Natural killer cell (primary cell): ENCODE measurements at regions of chr2 and their contacts with region 1.

Region 1: DNA sequence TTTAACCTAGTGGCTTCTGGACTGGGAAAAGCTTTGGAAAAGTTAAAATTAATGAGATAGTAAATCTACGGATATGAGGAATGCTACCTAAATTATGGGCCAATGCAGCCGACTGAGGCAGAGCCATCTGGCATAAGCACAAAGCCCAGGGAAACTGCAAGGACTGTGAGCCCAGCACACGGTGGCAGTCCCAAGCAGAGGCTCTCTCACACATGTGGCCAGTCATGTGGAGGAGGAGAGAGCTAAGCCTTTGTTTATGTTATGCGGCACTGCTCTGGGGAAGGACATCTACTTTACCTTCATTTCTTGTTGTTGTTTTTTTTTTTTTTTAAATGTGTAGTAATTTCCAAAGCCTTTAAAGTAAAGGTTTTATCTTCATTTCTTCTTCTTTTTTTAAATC is 267.0 kb downstream of the STK39 start:
- DNase-seq: no peak
- ATAC-seq: no peak
- H3K4me3 ChIP-seq: no peak overlapping the region
- H3K4me3 Mint-ChIP-seq: no peak overlapping the region
- H3K27ac ChIP-seq: no peak overlapping the region
- H3K27ac Mint-ChIP-seq: peak overlapping the region in 1 of 2 donors; percentile 41
- H3K4me1 ChIP-seq: no peaks in the 10 kb centered on the region
- H3K4me1 Mint-ChIP-seq: peaks cover 36 to 38% of the 10 kb centered on the region in 2 donors
- H3K27me3 ChIP-seq: no peaks in the 10 kb centered on the region
- H3K27me3 Mint-ChIP-seq: no peaks in the 10 kb centered on the region
- CTCF ChIP-seq: no peak

Region 2: GRCh38 chr2:167862787-167863186 is 117.7 kb before region 1 on chr2:
- intact Hi-C with region 1: no loop called
- DNase-seq: no peak
- ATAC-seq: no peak
- H3K4me3 ChIP-seq: no peak overlapping the region
- H3K4me3 Mint-ChIP-seq: no peak overlapping the region
- H3K27ac ChIP-seq: no peak overlapping the region
- H3K27ac Mint-ChIP-seq: no peak overlapping the region
- H3K4me1 ChIP-seq: no peaks in the 10 kb centered on the region
- H3K4me1 Mint-ChIP-seq: no peaks in the 10 kb centered on the region
- H3K27me3 ChIP-seq: no peaks in the 10 kb centered on the region
- H3K27me3 Mint-ChIP-seq: peaks cover 0 to 3% of the 10 kb centered on the region in 2 donors
- CTCF ChIP-seq: no peak

Region 3: GRCh38 chr2:168118733-168119514 is 138.5 kb after region 1 on chr2:
- intact Hi-C with region 1: loop called (anchors 10 kb)
- DNase-seq: peak in 1 of 2 donors; percentile 64
- ATAC-seq: peak; percentile 73 to 82 (median 78)
- H3K4me3 ChIP-seq: no peak overlapping the region
- H3K4me3 Mint-ChIP-seq: no peak overlapping the region
- H3K27ac ChIP-seq: no peak overlapping the region
- H3K27ac Mint-ChIP-seq: no peak overlapping the region
- H3K4me1 ChIP-seq: peaks cover 6% of the 10 kb centered on the region
- H3K4me1 Mint-ChIP-seq: peaks cover 5 to 8% of the 10 kb centered on the region in 2 donors
- H3K27me3 ChIP-seq: no peaks in the 10 kb centered on the region
- H3K27me3 Mint-ChIP-seq: no peaks in the 10 kb centered on the region
- CTCF ChIP-seq: peak; percentile 65

Region 4: GRCh38 chr2:168346725-168347477 is 366.5 kb after region 1 on chr2:
- intact Hi-C with region 1: no loop called
- DNase-seq: peak; percentile 50 to 85
- ATAC-seq: peak; percentile 81 to 96 (median 93)
- H3K4me3 ChIP-seq: peak overlapping the region; percentile 36
- H3K4me3 Mint-ChIP-seq: peak overlapping the region; percentile 91
- H3K27ac ChIP-seq: no peak overlapping the region
- H3K27ac Mint-ChIP-seq: peak overlapping the region in 1 of 2 donors; percentile 74
- H3K4me1 ChIP-seq: peaks cover 6% of the 10 kb centered on the region
- H3K4me1 Mint-ChIP-seq: peaks cover 9 to 10% of the 10 kb centered on the region in 2 donors
- H3K27me3 ChIP-seq: no peaks in the 10 kb centered on the region
- H3K27me3 Mint-ChIP-seq: peaks cover 0 to 7% of the 10 kb centered on the region in 2 donors
- CTCF ChIP-seq: peak; percentile 84